Naive thymus-derived CD4-positive, alpha-beta T cell (primary cell): ENCODE measurements at regions of chr12 and their contacts with region 1.

Region 1: GRCh38 chr12:108457006-108457733 is 57.9 kb upstream of the FICD start:
- DNase-seq: peak in 3 of 9 donors; percentile 14 to 28 (median 18)
- ATAC-seq: peak; percentile 60
- H3K4me3 ChIP-seq: no peak overlapping the region
- H3K4me3 Mint-ChIP-seq: no peak overlapping the region
- H3K27ac ChIP-seq: no peak overlapping the region
- H3K27ac Mint-ChIP-seq: no peak overlapping the region
- H3K4me1 ChIP-seq: no peaks in the 10 kb centered on the region
- H3K4me1 Mint-ChIP-seq: no peaks in the 10 kb centered on the region
- H3K27me3 ChIP-seq: no peaks in the 10 kb centered on the region
- H3K27me3 Mint-ChIP-seq: peaks cover 0 to 47% (median 32%) of the 10 kb centered on the region in 5 donors

Region 2: GRCh38 chr12:107917912-107918800 is 539.0 kb before region 1 on chr12:
- CTCF ChIA-PET with region 1: no interaction called
- POLR2A ChIA-PET with region 1: no interaction called
- intact Hi-C with region 1: loop called in 1 of 2 experiments (anchors 5 kb)
- DNase-seq: no peak
- ATAC-seq: no peak
- H3K4me3 ChIP-seq: no peak overlapping the region
- H3K4me3 Mint-ChIP-seq: no peak overlapping the region
- H3K27ac ChIP-seq: no peak overlapping the region
- H3K27ac Mint-ChIP-seq: no peak overlapping the region
- H3K4me1 ChIP-seq: no peaks in the 10 kb centered on the region
- H3K4me1 Mint-ChIP-seq: peaks cover 0 to 2% (median 0%) of the 10 kb centered on the region in 7 donors
- H3K27me3 ChIP-seq: no peaks in the 10 kb centered on the region
- H3K27me3 Mint-ChIP-seq: peaks cover 14 to 81% (median 56%) of the 10 kb centered on the region in 5 donors

Region 3: DNA sequence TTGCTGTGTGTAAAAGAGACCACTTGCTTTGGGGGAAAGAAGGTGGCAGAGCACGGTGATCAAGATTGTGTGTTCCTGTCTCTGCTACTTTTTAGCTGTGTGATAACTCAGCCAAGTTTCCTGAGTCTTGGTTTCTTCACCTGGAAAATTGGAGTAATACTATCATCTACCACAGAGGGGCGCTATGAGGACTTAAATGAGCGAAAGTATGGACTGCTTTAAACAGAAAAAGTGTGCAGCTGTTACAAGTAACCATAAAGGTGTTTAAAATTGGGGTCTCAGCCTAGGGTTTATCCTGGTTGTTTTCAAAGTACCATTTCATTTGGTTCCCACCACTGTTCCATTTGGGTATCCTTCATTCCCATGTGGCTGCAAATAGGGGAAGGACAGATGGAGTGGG is 394.0 kb before region 1 on chr12:
- CTCF ChIA-PET with region 1: no interaction called
- POLR2A ChIA-PET with region 1: no interaction called
- intact Hi-C with region 1: loop called in 1 of 2 experiments (anchors 2 kb)
- DNase-seq: no peak
- ATAC-seq: no peak
- H3K4me3 ChIP-seq: no peak overlapping the region
- H3K4me3 Mint-ChIP-seq: no peak overlapping the region
- H3K27ac ChIP-seq: no peak overlapping the region
- H3K27ac Mint-ChIP-seq: no peak overlapping the region
- H3K4me1 ChIP-seq: no peaks in the 10 kb centered on the region
- H3K4me1 Mint-ChIP-seq: no peaks in the 10 kb centered on the region
- H3K27me3 ChIP-seq: no peaks in the 10 kb centered on the region
- H3K27me3 Mint-ChIP-seq: peaks cover 0 to 37% (median 18%) of the 10 kb centered on the region in 5 donors